Prostate gland (tissue), 2 donors: ENCODE measurements at regions of chr19 and their contacts with region 1.

Region 1: GRCh38 chr19:6125571-6125989 is 9.9 kb upstream of the ACSBG2 start:
- DNase-seq: peak; percentile 41
- H3K4me3 ChIP-seq: no peak overlapping the region
- H3K27ac ChIP-seq: no peak overlapping the region
- H3K4me1 ChIP-seq: no peaks in the 10 kb centered on the region
- H3K27me3 ChIP-seq: no peaks in the 10 kb centered on the region
- CTCF ChIP-seq: peak; percentile 67 to 91 (median 76)
- POLR2A ChIP-seq: no peak

Region 2: GRCh38 chr19:5891938-5892771 is 233.4 kb before region 1 on chr19:
- intact Hi-C with region 1: no loop called
- DNase-seq: no peak
- H3K4me3 ChIP-seq: no peak overlapping the region
- H3K27ac ChIP-seq: no peak overlapping the region
- H3K4me1 ChIP-seq: no peaks in the 10 kb centered on the region
- H3K27me3 ChIP-seq: no peaks in the 10 kb centered on the region
- CTCF ChIP-seq: peak in 3 of 4 experiments; percentile 61 to 77 (median 74)
- POLR2A ChIP-seq: no peak

Region 3: GRCh38 chr19:5987077-5987818 is 138.3 kb before region 1 on chr19:
- intact Hi-C with region 1: loop called (anchors 10 kb)
- DNase-seq: peak; percentile 84
- H3K4me3 ChIP-seq: peak overlapping the region in 1 of 2 donors; percentile 16
- H3K27ac ChIP-seq: peak overlapping the region; percentile 20 to 33
- H3K4me1 ChIP-seq: peaks cover 8% of the 10 kb centered on the region
- H3K27me3 ChIP-seq: no peaks in the 10 kb centered on the region
- CTCF ChIP-seq: peak; percentile 92 to 98 (median 96)
- POLR2A ChIP-seq: no peak

Region 4: DNA sequence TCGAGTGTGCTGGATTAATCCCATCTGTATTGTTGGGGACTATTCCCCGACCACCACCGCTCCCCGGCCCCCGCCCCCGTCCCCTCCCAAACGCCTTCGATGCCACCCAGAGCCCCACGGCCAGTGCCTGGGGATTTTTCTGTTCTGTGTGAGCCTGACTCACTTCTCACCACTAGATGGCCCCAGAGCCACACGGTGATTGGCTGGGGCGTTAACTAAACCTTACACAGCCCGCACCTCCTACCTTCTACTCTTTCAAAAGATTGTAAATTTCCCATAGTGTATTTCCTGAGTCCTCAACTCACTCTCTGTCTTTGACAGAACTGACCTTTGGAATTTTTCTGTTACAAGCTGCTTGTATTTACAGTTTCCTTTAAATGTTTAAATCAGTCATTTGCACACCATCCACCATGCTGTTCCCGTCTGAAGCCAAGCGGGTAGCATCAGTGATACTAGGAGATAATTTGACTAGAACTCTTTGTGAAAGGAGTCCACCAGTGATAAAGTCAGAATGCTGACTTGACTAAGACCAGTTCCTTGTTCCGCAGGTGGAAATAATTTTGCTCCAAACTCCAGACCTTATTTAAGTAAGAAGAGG is 76.7 kb before region 1 on chr19:
- intact Hi-C with region 1: loop called (anchors 1 kb)
- DNase-seq: peak; percentile 70
- H3K4me3 ChIP-seq: no peak overlapping the region
- H3K27ac ChIP-seq: no peak overlapping the region
- H3K4me1 ChIP-seq: no peaks in the 10 kb centered on the region
- H3K27me3 ChIP-seq: no peaks in the 10 kb centered on the region
- CTCF ChIP-seq: peak; percentile 56 to 88 (median 82)
- POLR2A ChIP-seq: no peak